Activated CD4-positive, alpha-beta T cell treated with anti-CD3 and anti-CD28 coated beads, Interleukin-2, amount 10 ng/mL, durations not matched to agents 24 days and 14 days (primary cell): ENCODE measurements at regions of chr7 and their contacts with region 1.

Region 1: DNA sequence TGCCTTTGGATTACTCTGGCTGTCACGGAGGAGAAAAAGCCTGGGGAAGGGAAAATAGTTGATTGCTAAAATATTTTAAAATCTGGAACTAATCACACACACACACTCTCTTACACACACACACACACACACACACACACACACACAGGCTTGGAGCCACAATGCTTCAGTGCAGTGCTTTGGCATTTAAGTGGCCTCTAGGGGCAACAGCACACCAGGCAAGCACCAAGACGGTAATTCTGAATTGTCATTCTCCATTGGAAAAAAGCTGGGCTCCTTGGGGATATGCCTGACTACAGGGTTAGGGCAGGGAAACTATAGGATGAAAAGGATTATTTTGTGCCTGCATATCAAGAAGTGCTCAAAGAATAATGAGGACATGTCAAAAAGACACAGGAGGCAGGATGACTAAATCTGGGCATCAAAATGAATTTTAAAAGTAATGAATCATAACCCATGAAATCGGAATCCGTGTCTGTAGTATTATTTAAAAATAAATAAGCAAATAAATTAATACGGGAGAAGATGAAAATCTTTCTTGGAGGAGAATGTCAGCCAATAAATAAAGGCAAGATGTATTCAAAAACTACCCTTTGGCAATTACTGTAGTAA is 30.4 kb upstream of the DDC start:
- DNase-seq: peak; percentile 64
- H3K4me3 Mint-ChIP-seq: no peak overlapping the region
- H3K27ac Mint-ChIP-seq: no peak overlapping the region
- H3K4me1 Mint-ChIP-seq: peaks cover 18% of the 10 kb centered on the region
- H3K27me3 Mint-ChIP-seq: peaks cover 8% of the 10 kb centered on the region

Region 2: DNA sequence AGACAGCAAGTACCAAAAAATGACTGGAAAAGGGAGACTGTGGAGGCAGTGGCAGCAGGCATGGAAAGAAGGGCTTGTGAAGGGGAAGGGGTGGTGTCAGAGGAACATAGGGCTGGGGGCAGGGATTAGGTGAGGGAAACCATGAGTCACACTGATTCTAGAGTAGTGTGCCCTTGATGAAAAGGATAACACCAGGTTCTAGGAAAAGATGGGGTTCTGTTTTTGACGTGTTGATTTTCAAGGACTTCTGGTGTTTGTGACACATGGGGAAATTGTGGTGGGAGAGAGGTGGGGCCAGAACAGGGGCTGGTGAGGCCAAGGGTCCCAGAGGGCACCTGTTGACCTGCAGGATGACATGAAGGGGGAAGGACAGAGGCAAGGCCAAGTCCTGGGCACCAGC is 202.5 kb before region 1 on chr7:
- intact Hi-C with region 1: no loop called
- DNase-seq: peak; percentile 82
- H3K4me3 Mint-ChIP-seq: peak overlapping the region; percentile 82
- H3K27ac Mint-ChIP-seq: peak overlapping the region; percentile 97
- H3K4me1 Mint-ChIP-seq: peaks cover 82% of the 10 kb centered on the region
- H3K27me3 Mint-ChIP-seq: no peaks in the 10 kb centered on the region

Region 3: GRCh38 chr7:50534690-50535290 is 60.8 kb before region 1 on chr7:
- intact Hi-C with region 1: loop called (anchors 10 kb)
- DNase-seq: no peak
- H3K4me3 Mint-ChIP-seq: no peak overlapping the region
- H3K27ac Mint-ChIP-seq: no peak overlapping the region
- H3K4me1 Mint-ChIP-seq: peaks cover 17% of the 10 kb centered on the region
- H3K27me3 Mint-ChIP-seq: peaks cover 10% of the 10 kb centered on the region

Region 4: GRCh38 chr7:50564640-50565558 is 30.7 kb before region 1 on chr7 and contains the start of gene DDC:
- intact Hi-C with region 1: no loop called
- DNase-seq: no peak
- H3K4me3 Mint-ChIP-seq: no peak within 1 kb of the TSS
- H3K27ac Mint-ChIP-seq: no peak within 1 kb of the TSS
- H3K4me1 Mint-ChIP-seq: no peaks in the 10 kb centered on the region
- H3K27me3 Mint-ChIP-seq: peaks cover 6% of the 10 kb centered on the region
- total RNA-seq, gene DDC: 0.19 and 0.35 TPM in 2 replicates

Region 5: GRCh38 chr7:50610521-50611277 is 15.1 kb after region 1 on chr7:
- intact Hi-C with region 1: loop called (anchors 2 kb)
- DNase-seq: peak; percentile 86
- H3K4me3 Mint-ChIP-seq: no peak overlapping the region
- H3K27ac Mint-ChIP-seq: no peak overlapping the region
- H3K4me1 Mint-ChIP-seq: peaks cover 24% of the 10 kb centered on the region
- H3K27me3 Mint-ChIP-seq: peaks cover 22% of the 10 kb centered on the region

Region 6: GRCh38 chr7:50826371-50827172 is 231.0 kb after region 1 on chr7:
- intact Hi-C with region 1: loop called (anchors 5 kb)
- DNase-seq: peak; percentile 81
- H3K4me3 Mint-ChIP-seq: peak overlapping the region; percentile 42
- H3K27ac Mint-ChIP-seq: peak overlapping the region; percentile 81
- H3K4me1 Mint-ChIP-seq: peaks cover 21% of the 10 kb centered on the region
- H3K27me3 Mint-ChIP-seq: peaks cover 25% of the 10 kb centered on the region